ENCODE measurements at regions of chr19 and their contacts with region 1.

Region 1: DNA sequence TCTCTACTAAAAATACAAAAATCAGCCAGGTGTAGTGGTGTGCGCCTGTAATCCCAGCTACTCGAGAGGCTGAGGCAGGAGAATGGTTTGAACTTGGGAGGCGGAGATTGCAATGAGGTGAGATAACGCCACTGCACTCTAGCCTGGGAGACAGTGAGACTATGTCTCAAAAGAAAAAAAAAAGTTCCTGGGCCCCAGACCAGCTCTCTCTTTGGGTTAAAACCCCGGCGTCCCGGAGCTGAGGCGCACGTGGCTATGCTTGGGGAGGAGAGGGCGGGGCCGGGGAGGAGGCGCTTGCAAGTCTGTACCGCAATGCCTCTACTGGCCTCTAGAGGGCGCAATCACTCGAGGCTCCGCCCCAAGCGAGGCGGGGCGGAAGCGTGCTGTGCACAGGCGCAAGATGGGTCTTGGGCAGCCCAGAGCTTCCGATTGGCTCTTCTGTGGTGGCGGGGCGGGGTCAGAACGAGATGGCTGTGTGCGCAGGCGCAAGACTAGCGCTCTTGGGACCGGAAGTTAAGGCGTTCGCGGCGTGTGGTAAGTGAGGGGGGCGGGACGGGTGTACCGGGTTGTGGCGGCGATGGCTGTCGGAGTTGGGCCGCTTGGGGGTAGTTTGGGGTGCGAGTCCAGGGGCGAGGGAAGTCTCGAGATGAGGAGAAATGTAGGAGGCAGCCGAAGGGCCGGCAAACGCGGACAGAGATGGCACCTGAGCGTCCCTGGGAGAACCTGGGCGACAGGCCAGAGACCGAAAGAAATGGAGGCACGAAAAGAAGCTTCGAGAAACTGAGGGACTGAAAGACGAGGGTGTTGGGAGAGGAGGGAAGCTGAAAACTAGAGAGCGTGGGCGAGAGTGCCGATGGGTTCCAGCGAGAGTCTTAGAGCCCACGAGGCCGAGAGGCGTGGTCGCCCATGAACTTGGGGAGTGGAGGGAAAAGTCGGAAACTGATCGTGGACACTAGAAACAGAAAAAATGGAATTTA is at the start of gene DHX34:
- DNase-seq: peak; percentile 99
- H3K4me3 Mint-ChIP-seq: peak within 1 kb of the TSS; percentile 100
- H3K27ac Mint-ChIP-seq: peak within 1 kb of the TSS; percentile 88
- H3K4me1 Mint-ChIP-seq: peaks cover 43% of the 10 kb centered on the region
- H3K27me3 Mint-ChIP-seq: no peaks in the 10 kb centered on the region
- total RNA-seq, gene DHX34: 11.2 to 11.6 TPM

Region 2: DNA sequence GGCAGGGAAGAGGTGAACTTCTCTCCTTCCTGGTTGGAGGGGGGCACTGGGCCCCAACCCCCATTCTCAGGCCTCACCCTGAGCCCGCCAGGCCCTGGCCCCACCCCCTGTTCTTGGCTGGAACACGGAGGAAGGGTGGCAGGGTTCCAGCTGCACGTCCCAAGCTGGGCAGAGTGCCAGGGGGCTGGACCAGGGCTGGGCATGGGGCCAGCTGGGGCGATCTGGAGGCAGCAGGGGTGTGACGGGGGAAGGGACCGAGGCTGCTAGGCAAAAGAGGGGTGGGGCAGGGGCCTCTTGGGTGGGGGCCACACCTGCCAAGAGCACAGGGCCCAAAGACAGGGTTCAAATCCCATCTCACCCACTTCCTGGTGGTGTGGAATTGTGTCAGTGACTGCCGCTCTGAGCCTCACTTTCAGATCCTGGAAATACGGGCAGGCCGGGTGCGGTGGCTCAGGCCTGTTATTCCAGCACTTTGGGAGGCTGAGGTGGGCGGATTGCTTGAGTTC is 1050.0 kb before region 1 on chr19:
- CTCF ChIA-PET with region 1: no interaction called
- intact Hi-C with region 1: no loop called
- DNase-seq: no peak
- H3K4me3 Mint-ChIP-seq: no peak overlapping the region
- H3K27ac Mint-ChIP-seq: no peak overlapping the region
- H3K4me1 Mint-ChIP-seq: peaks cover 5% of the 10 kb centered on the region
- H3K27me3 Mint-ChIP-seq: peaks cover 27% of the 10 kb centered on the region

Region 3: GRCh38 chr19:47047763-47048405 is 301.2 kb before region 1 on chr19:
- CTCF ChIA-PET with region 1: no interaction called
- intact Hi-C with region 1: loop called (anchors 1 kb)
- DNase-seq: peak; percentile 91
- H3K4me3 Mint-ChIP-seq: peak overlapping the region; percentile 98
- H3K27ac Mint-ChIP-seq: peak overlapping the region; percentile 84
- H3K4me1 Mint-ChIP-seq: peaks cover 13% of the 10 kb centered on the region
- H3K27me3 Mint-ChIP-seq: no peaks in the 10 kb centered on the region

Region 4: GRCh38 chr19:47296036-47296435 is 53.1 kb before region 1 on chr19:
- CTCF ChIA-PET with region 1: interaction called, 13 read pairs
- intact Hi-C with region 1: no loop called
- DNase-seq: peak; percentile 91
- H3K4me3 Mint-ChIP-seq: no peak overlapping the region
- H3K27ac Mint-ChIP-seq: no peak overlapping the region
- H3K4me1 Mint-ChIP-seq: no peaks in the 10 kb centered on the region
- H3K27me3 Mint-ChIP-seq: no peaks in the 10 kb centered on the region

Region 5: DNA sequence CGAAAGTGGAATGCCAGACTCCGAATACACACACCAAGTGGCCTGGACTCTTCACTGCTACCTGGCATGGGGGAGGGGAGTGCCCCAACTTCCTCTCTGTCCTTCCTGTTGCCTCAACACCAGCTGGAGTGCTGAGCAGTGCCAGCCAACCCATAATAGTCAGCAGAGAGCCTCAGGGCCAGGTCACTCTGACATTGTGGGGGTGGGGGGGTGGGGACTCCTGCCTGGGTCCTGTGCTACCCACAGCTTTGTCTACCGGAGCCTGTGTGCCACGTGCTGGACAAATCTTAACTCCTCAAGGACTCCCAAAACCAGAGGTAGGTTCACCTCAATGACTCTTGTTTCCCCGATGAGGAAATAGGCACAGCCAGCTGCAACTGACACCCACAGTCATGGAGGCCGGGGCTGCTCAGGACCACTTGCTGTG is 12.2 kb before region 1 on chr19:
- CTCF ChIA-PET with region 1: interaction called, 16 read pairs
- intact Hi-C with region 1: no loop called
- DNase-seq: peak; percentile 32
- H3K4me3 Mint-ChIP-seq: no peak overlapping the region
- H3K27ac Mint-ChIP-seq: no peak overlapping the region
- H3K4me1 Mint-ChIP-seq: peaks cover 7% of the 10 kb centered on the region
- H3K27me3 Mint-ChIP-seq: no peaks in the 10 kb centered on the region

Region 6: DNA sequence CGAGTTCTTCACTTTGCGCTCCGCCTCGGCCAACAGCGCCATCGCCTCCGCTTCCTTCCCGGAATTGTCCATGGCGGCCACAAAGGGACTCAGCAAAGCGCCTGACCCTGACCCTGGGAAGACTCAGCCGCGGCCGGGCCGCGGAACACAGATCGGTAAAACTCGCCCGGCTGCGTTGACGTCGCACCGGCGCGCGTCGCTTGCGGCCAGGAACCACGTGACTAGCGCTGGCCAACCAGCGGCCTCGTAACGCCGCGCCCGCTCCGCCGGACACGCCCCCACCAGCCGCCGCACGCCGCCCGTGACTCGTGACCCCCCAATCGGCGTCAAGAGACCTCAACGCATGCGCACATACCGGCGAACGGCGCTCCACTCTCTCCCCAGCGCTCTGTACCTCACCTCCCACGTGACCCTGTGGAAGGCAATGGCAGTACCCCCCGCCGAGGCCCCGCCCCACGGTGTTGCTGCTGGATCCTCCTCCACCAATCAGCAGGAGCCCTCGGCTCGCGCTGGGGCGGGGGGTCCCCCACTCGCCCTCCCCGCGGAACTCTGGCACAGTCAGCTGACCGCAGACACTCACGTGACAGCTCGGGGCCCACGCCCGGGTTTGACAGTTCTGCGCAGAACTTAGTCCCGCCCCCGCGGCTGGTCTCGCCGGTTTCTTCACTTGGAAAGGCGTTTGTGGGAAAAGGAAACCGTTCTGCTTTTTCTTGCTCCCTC is 165.9 kb after region 1 on chr19 and contains the start of gene NAPA:
- CTCF ChIA-PET with region 1: no interaction called
- intact Hi-C with region 1: loop called (anchors 1 kb)
- DNase-seq: peak; percentile 100
- H3K4me3 Mint-ChIP-seq: peak within 1 kb of the TSS; percentile 98
- H3K27ac Mint-ChIP-seq: peak within 1 kb of the TSS; percentile 97
- H3K4me1 Mint-ChIP-seq: peaks cover 81% of the 10 kb centered on the region
- H3K27me3 Mint-ChIP-seq: no peaks in the 10 kb centered on the region
- total RNA-seq, gene NAPA: 72.5 to 75.1 TPM

Region 7: GRCh38 chr19:47676811-47677210 is 327.7 kb after region 1 on chr19:
- CTCF ChIA-PET with region 1: no interaction called
- intact Hi-C with region 1: no loop called
- DNase-seq: no peak
- H3K4me3 Mint-ChIP-seq: no peak overlapping the region
- H3K27ac Mint-ChIP-seq: no peak overlapping the region
- H3K4me1 Mint-ChIP-seq: no peaks in the 10 kb centered on the region
- H3K27me3 Mint-ChIP-seq: no peaks in the 10 kb centered on the region

Measured in activated naive CD4-positive, alpha-beta T cell treated with anti-CD3 and anti-CD28 coated beads for 36 hours (primary cell).